A673 (cell line): ENCODE measurements at regions of chr7 and their contacts with region 1.

Region 1: GRCh38 chr7:26200444-26201246 is at the start of gene HNRNPA2B1:
- DNase-seq: peak; percentile 98
- H3K4me3 ChIP-seq: peak within 1 kb of the TSS; percentile 91
- H3K27ac ChIP-seq: peak within 1 kb of the TSS; percentile 100
- H3K4me1 ChIP-seq: peaks cover 24% of the 10 kb centered on the region
- H3K27me3 ChIP-seq: no peaks in the 10 kb centered on the region
- CTCF ChIP-seq: 0 out of 2 replicates have a peak, but pooled peaks have one; percentile 18
- total RNA-seq, gene HNRNPA2B1: 1,150 and 1,229 TPM in 2 replicates

Region 2: GRCh38 chr7:25862260-25863037 is 338.2 kb before region 1 on chr7:
- CTCF ChIA-PET with region 1: no interaction called
- POLR2A ChIA-PET with region 1: no interaction called
- intact Hi-C with region 1: loop called (anchors 1 kb)
- DNase-seq: peak; percentile 100
- H3K4me3 ChIP-seq: no peak overlapping the region
- H3K27ac ChIP-seq: no peak overlapping the region
- H3K4me1 ChIP-seq: peaks cover 22% of the 10 kb centered on the region
- H3K27me3 ChIP-seq: peaks cover 45% of the 10 kb centered on the region
- CTCF ChIP-seq: no peak

Region 3: GRCh38 chr7:25940086-25940906 is 260.3 kb before region 1 on chr7:
- CTCF ChIA-PET with region 1: no interaction called
- POLR2A ChIA-PET with region 1: no interaction called
- intact Hi-C with region 1: loop called (anchors 5 kb)
- DNase-seq: peak; percentile 98
- H3K4me3 ChIP-seq: peak overlapping the region; percentile 31
- H3K27ac ChIP-seq: peak overlapping the region; percentile 89
- H3K4me1 ChIP-seq: peaks cover 32% of the 10 kb centered on the region
- H3K27me3 ChIP-seq: no peaks in the 10 kb centered on the region
- CTCF ChIP-seq: no peak

Region 4: GRCh38 chr7:26090927-26091519 is 109.6 kb before region 1 on chr7:
- CTCF ChIA-PET with region 1: interaction called, 3 read pairs
- POLR2A ChIA-PET with region 1: interaction called, 4 read pairs
- intact Hi-C with region 1: loop called (anchors 2 kb)
- DNase-seq: peak; percentile 86
- H3K4me3 ChIP-seq: peak overlapping the region; percentile 31
- H3K27ac ChIP-seq: peak overlapping the region; percentile 31
- H3K4me1 ChIP-seq: peaks cover 10% of the 10 kb centered on the region
- H3K27me3 ChIP-seq: no peaks in the 10 kb centered on the region
- CTCF ChIP-seq: peak; percentile 84